ENCODE measurements at regions of chr6 and their contacts with region 1.

Region 1: DNA sequence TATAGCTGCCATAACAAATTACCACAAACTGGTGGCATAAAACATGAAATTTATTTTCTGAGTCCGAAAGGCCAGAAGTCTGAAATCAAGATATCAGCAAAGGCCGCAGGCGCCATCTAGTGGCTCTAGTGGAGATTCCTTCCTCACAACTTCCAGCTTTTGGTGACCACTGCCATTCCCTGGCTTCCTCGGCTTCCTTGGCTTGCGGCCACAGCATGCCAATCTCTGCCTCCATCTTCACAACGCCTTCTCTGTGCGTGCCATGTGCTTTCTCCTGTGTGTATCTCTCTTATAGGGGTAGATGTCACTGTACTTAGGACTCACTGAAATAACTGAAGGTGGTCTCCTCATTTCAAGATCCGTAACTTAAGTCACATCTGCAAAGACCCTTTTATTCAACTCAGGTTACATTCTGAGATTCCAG is 5.4 kb upstream of the PLAGL1 start:
- DNase-seq: no peak
- ATAC-seq: peak; percentile 68
- H3K4me3 ChIP-seq: no peak overlapping the region
- H3K27ac ChIP-seq: no peak overlapping the region
- H3K4me1 ChIP-seq: no peaks in the 10 kb centered on the region
- H3K27me3 ChIP-seq: peaks cover 0 to 2% of the 10 kb centered on the region in 2 experiments; a peak in 2 of 4 replicates
- CTCF ChIP-seq: peak; percentile 78 to 88 (median 84)
- EP300 ChIP-seq: no peak
- POLR2A ChIP-seq: no peak
- RAD21 ChIP-seq: peak; percentile 94

Region 2: DNA sequence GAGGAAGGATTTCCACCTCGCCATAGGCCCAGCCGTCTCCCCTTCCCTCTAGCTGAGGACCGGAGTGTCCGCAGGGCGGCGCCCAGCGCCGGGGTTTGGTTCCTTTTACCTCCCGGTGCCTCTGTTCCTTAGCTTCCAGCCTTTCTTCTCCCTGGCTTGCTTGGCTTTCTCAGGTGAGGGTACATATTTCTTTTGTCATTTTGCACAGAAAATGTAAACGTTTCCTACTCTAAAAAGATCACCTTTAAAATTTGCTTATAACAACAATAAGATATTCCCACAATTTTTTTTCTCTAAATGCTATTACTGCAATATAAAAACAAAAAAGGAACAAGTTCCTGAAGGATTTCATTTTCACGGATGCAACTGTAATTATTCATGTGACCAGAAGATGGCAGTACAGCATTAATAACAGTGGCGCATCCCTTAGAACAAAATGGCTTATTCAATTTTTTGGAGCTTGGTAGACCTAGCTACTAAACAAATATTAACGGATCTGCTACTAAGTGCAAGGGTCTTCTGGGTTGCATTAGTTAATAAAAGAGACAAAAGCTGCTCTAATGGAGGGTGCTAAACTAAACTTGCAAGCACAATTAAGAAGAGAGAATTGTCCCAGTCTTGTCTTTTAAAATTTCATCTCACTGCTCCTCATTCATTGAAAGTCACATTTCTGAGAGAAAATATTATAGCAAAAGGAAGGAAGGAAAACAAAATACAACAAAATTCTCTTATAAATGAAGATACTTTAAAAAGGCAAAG is 1538.8 kb before region 1 on chr6:
- CTCF ChIA-PET with region 1: no interaction called
- POLR2A ChIA-PET with region 1: no interaction called
- RAD21 ChIA-PET with region 1: no interaction called
- SMC1A ChIA-PET with region 1: interaction called, 3 read pairs
- in situ Hi-C with region 1: loop called (anchors 25 kb)
- intact Hi-C with region 1: no loop called
- DNase-seq: no peak
- ATAC-seq: peak; percentile 69
- H3K4me3 ChIP-seq: no peak overlapping the region
- H3K27ac ChIP-seq: no peak overlapping the region
- H3K4me1 ChIP-seq: no peaks in the 10 kb centered on the region
- H3K27me3 ChIP-seq: no peaks in the 10 kb centered on the region; a peak in 1 of 4 replicates
- CTCF ChIP-seq: peak; percentile 53 to 79 (median 64); a peak in 5 of 6 replicates
- EP300 ChIP-seq: no peak
- POLR2A ChIP-seq: no peak
- RAD21 ChIP-seq: peak; percentile 89

Region 3: DNA sequence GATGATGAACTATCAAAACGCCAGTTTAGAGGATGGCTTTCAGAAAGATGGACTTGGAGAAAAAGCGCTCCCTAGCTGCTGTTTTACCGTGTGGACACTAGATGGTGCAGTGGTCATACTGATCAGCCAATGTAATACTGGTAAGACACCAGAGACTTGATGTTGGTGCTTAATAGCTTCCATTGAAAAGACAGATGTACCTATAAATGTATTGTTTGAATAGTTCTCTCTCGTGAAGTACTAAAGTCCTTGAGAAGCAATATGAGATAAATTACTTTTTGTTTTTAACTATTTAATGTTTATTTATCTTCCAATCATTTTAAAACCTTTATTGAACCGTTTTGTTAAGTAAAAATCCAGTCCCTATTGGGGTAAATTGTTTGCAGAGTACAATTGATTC is 438.1 kb before region 1 on chr6:
- CTCF ChIA-PET with region 1: interaction called, 86 read pairs
- POLR2A ChIA-PET with region 1: no interaction called
- RAD21 ChIA-PET with region 1: interaction called, 28 read pairs
- SMC1A ChIA-PET with region 1: interaction called, 51 read pairs
- in situ Hi-C with region 1: loop called (anchors 5 kb)
- intact Hi-C with region 1: loop called (anchors 1 kb)
- DNase-seq: peak; percentile 27
- ATAC-seq: peak; percentile 94
- H3K4me3 ChIP-seq: no peak overlapping the region
- H3K27ac ChIP-seq: no peak overlapping the region
- H3K4me1 ChIP-seq: no peaks in the 10 kb centered on the region
- H3K27me3 ChIP-seq: no peaks in the 10 kb centered on the region; a peak in 2 of 4 replicates
- CTCF ChIP-seq: peak; percentile 63 to 81 (median 79)
- EP300 ChIP-seq: no peak
- POLR2A ChIP-seq: no peak
- RAD21 ChIP-seq: peak; percentile 89

Region 4: DNA sequence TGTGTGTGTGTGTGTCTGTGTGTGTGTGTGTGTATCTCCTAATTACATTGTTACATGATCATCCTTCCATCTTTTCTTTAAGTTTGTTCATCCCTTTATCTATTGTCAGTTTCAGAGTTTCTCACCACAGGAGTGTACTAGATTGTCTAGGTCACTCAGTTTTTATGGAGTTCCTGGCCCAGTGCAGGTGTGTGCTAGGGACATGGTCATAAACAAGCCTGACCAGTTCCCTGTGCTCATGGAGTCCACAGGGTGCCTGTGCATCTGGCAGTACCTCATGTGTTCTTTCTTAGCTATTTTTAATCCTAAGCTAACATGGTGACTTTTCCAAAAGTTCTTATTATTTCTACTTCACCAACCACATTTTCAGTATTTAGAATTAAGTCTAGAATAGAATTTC is 291.9 kb before region 1 on chr6:
- CTCF ChIA-PET with region 1: no interaction called
- POLR2A ChIA-PET with region 1: no interaction called
- RAD21 ChIA-PET with region 1: no interaction called
- SMC1A ChIA-PET with region 1: no interaction called
- in situ Hi-C with region 1: no loop called
- intact Hi-C with region 1: no loop called
- DNase-seq: no peak
- ATAC-seq: no peak
- H3K4me3 ChIP-seq: no peak overlapping the region
- H3K27ac ChIP-seq: no peak overlapping the region
- H3K4me1 ChIP-seq: no peaks in the 10 kb centered on the region
- H3K27me3 ChIP-seq: no peaks in the 10 kb centered on the region
- CTCF ChIP-seq: no peak
- EP300 ChIP-seq: no peak
- POLR2A ChIP-seq: no peak
- RAD21 ChIP-seq: no peak

Region 5: DNA sequence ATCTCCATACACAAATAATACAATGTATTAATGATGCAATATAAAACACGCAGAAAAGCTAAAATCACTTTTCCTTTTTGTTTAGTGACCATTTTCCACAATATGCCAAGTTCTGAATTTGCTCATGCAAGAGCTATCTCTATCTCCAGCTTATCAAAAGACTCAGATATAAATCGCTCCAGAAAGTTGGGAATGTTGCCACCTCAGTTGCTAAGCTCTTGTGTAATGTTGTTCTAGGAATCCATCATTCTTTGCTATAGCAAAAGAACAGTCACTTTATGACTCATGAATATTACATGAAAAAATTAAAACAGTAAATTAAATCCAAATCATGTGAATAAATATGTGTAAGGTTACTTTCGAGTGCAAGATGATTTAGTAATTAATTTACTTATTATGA is 14.1 kb before region 1 on chr6:
- CTCF ChIA-PET with region 1: interaction called, 15 read pairs
- POLR2A ChIA-PET with region 1: no interaction called
- RAD21 ChIA-PET with region 1: interaction called, 3 read pairs
- SMC1A ChIA-PET with region 1: no interaction called
- in situ Hi-C with region 1: no loop called
- intact Hi-C with region 1: no loop called
- DNase-seq: no peak
- ATAC-seq: no peak
- H3K4me3 ChIP-seq: no peak overlapping the region
- H3K27ac ChIP-seq: no peak overlapping the region
- H3K4me1 ChIP-seq: no peaks in the 10 kb centered on the region
- H3K27me3 ChIP-seq: no peaks in the 10 kb centered on the region
- CTCF ChIP-seq: no peak
- EP300 ChIP-seq: no peak
- POLR2A ChIP-seq: no peak
- RAD21 ChIP-seq: no peak

Region 6: GRCh38 chr6:144027932-144028587 is 14.6 kb after region 1 on chr6:
- CTCF ChIA-PET with region 1: interaction called, 23 read pairs
- POLR2A ChIA-PET with region 1: no interaction called
- RAD21 ChIA-PET with region 1: interaction called, 7 read pairs
- SMC1A ChIA-PET with region 1: interaction called, 4 read pairs
- in situ Hi-C with region 1: no loop called
- intact Hi-C with region 1: no loop called
- DNase-seq: no peak
- ATAC-seq: no peak
- H3K4me3 ChIP-seq: no peak overlapping the region
- H3K27ac ChIP-seq: no peak overlapping the region
- H3K4me1 ChIP-seq: no peaks in the 10 kb centered on the region
- H3K27me3 ChIP-seq: no peaks in the 10 kb centered on the region
- CTCF ChIP-seq: no peak
- EP300 ChIP-seq: no peak
- POLR2A ChIP-seq: no peak
- RAD21 ChIP-seq: no peak

Region 7: GRCh38 chr6:144055121-144055931 is 41.8 kb after region 1 on chr6:
- CTCF ChIA-PET with region 1: interaction called, 11 read pairs
- POLR2A ChIA-PET with region 1: no interaction called
- RAD21 ChIA-PET with region 1: interaction called, 5 read pairs
- SMC1A ChIA-PET with region 1: interaction called, 6 read pairs
- in situ Hi-C with region 1: no loop called
- intact Hi-C with region 1: no loop called
- DNase-seq: no peak
- ATAC-seq: peak; percentile 93
- H3K4me3 ChIP-seq: peak overlapping the region; percentile 69
- H3K27ac ChIP-seq: peak overlapping the region; percentile 84
- H3K4me1 ChIP-seq: peaks cover 5% of the 10 kb centered on the region
- H3K27me3 ChIP-seq: no peaks in the 10 kb centered on the region
- CTCF ChIP-seq: no peak
- EP300 ChIP-seq: no peak
- POLR2A ChIP-seq: no peak
- RAD21 ChIP-seq: no peak

Region 8: GRCh38 chr6:144087789-144088426 is 74.4 kb after region 1 on chr6:
- CTCF ChIA-PET with region 1: interaction called, 19 read pairs
- POLR2A ChIA-PET with region 1: no interaction called
- RAD21 ChIA-PET with region 1: interaction called, 7 read pairs
- SMC1A ChIA-PET with region 1: interaction called, 15 read pairs
- in situ Hi-C with region 1: no loop called
- intact Hi-C with region 1: loop called (anchors 5 kb)
- DNase-seq: no peak
- ATAC-seq: peak; percentile 68
- H3K4me3 ChIP-seq: no peak overlapping the region
- H3K27ac ChIP-seq: no peak overlapping the region
- H3K4me1 ChIP-seq: peaks cover 9% of the 10 kb centered on the region
- H3K27me3 ChIP-seq: no peaks in the 10 kb centered on the region
- CTCF ChIP-seq: peak; percentile 31 to 54 (median 32); a peak in 5 of 6 replicates
- EP300 ChIP-seq: no peak
- POLR2A ChIP-seq: no peak
- RAD21 ChIP-seq: peak; percentile 46